ENCODE measurements at regions of chr2 and their contacts with region 1.

Region 1: DNA sequence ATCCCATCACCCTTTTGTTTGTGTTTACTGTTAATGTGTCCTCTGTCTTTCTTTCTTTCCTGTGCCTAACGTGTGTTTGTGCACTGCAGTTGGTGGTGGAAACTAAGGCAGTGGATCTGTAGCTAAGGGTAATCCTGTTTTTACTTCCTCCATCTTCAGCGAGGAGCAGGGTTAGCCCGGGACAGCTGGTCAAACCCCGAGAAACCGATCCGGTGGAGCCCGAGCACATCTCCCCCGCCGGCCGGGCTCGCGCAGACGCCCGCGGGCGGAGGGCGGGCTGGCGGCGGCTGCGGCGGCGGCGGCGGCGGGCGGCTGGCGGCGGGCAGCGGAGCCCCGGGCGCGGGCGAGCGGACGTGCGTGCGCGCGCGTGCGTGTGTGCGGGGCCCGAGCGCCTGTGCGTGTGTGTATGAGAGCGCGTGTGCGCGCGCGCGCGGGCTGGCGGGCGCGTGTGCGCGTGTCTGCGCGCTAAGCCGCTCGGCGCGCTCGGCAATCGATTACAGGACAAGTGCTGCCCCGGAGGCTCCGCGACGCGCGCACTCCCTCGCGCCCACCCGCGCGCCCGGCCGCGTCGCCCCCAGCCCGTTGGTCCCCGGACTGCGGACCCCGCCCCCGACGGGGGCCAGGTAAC is at the start of gene IKZF2:
- DNase-seq: peak; percentile 88 to 89 (median 88)
- ATAC-seq: peak; percentile 96
- H3K4me3 ChIP-seq: peak within 1 kb of the TSS; percentile 82
- H3K4me1 ChIP-seq: peaks cover 5% of the 10 kb centered on the region
- CTCF ChIP-seq: no peak
- total RNA-seq, gene IKZF2: 5.6 to 11.1 (median 8.6) TPM

Region 2: GRCh38 chr2:212686285-212686895 is 465.2 kb before region 1 on chr2:
- intact Hi-C with region 1: loop called in 1 of 2 experiments (anchors 2 kb)
- DNase-seq: peak in 2 of 3 donors; percentile 22 to 74
- ATAC-seq: peak; percentile 53
- H3K4me3 ChIP-seq: no peak overlapping the region
- H3K4me1 ChIP-seq: no peaks in the 10 kb centered on the region
- CTCF ChIP-seq: peak; percentile 46

Region 3: DNA sequence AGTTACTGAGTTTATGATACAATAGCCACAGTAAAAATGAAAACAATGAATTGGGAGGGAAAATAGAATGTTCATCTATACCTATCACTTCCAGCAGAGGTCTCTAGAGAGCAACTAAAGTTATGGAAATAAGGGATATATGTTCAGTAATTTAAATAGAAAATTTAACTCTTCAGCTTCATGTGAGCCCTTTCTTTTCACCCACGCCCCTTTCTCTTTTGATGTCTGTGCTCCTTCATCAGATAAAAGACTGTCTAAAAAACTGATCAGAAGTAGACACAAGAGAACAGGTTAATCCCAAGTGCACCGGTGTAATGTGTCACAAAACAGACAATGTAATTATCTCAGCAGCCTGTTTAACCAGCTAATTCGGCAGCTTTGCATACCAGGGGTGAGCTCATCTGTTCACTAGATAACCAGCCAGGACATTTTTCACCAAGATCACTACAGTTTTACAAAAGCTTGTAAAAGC is 374.5 kb before region 1 on chr2:
- intact Hi-C with region 1: loop called (anchors 2 to 10 kb)
- DNase-seq: peak in 1 of 3 donors; percentile 2
- ATAC-seq: peak; percentile 29
- H3K4me3 ChIP-seq: no peak overlapping the region
- H3K4me1 ChIP-seq: no peaks in the 10 kb centered on the region
- CTCF ChIP-seq: no peak

Measured in mucosa of descending colon (tissue), 3 donors.